ENCODE measurements at regions of chr14 and their contacts with region 1.

Region 1: GRCh38 chr14:71549421-71550050 is 382.7 kb upstream of the RGS6 start:
- DNase-seq: no peak
- H3K4me3 ChIP-seq: no peak overlapping the region
- H3K27ac ChIP-seq: no peak overlapping the region
- H3K4me1 ChIP-seq: peaks cover 10 to 13% of the 10 kb centered on the region in 2 donors
- H3K27me3 ChIP-seq: no peaks in the 10 kb centered on the region
- CTCF ChIP-seq: no peak
- POLR2A ChIP-seq: no peak

Region 2: GRCh38 chr14:71582705-71583104 is 33.2 kb after region 1 on chr14:
- intact Hi-C with region 1: loop called in 1 of 2 experiments (anchors 5 kb)
- DNase-seq: no peak
- H3K4me3 ChIP-seq: no peak overlapping the region
- H3K27ac ChIP-seq: no peak overlapping the region
- H3K4me1 ChIP-seq: peaks cover 11 to 30% of the 10 kb centered on the region in 2 donors
- H3K27me3 ChIP-seq: no peaks in the 10 kb centered on the region
- CTCF ChIP-seq: no peak
- POLR2A ChIP-seq: no peak